WTC11 (cell line): ENCODE measurements at regions of chr7 and their contacts with region 1.

Region 1: GRCh38 chr7:131859147-131859821 is 302.9 kb upstream of the PODXL start:
- DNase-seq: peak; percentile 83
- ATAC-seq: peak; percentile 98
- H3K4me3 Mint-ChIP-seq: no peak overlapping the region
- H3K27ac Mint-ChIP-seq: no peak overlapping the region
- H3K4me1 Mint-ChIP-seq: peaks cover 6% of the 10 kb centered on the region; the same call in 1 of the 2 replicates
- H3K27me3 Mint-ChIP-seq: peaks cover 6% of the 10 kb centered on the region
- CTCF ChIP-seq: peak; percentile 79

Region 2: DNA sequence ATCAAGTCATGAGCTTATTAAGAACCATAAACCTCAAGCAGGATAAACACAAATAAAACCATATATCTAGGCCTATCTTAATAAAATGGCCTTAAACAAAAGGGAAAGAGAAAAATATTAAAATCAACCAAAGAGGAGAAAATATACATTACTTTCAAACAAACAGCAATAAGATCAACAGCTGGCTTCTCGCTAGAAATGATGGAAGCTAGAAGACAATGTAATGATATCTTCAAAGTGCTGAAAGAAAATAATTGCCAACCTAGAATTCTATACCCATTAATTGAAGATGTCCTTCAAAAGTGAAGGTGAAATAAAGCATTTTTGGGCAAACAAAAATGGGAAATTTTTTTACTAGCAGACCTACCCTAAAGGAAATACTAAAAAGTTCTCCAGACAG is 160.0 kb before region 1 on chr7:
- CTCF ChIA-PET with region 1: interaction called, 14 read pairs
- POLR2A ChIA-PET with region 1: no interaction called
- DNase-seq: no peak
- ATAC-seq: no peak
- H3K4me3 Mint-ChIP-seq: no peak overlapping the region
- H3K27ac Mint-ChIP-seq: no peak overlapping the region
- H3K4me1 Mint-ChIP-seq: no peaks in the 10 kb centered on the region
- H3K27me3 Mint-ChIP-seq: peaks cover 4% of the 10 kb centered on the region; the same call in 1 of the 2 replicates
- CTCF ChIP-seq: no peak

Region 3: DNA sequence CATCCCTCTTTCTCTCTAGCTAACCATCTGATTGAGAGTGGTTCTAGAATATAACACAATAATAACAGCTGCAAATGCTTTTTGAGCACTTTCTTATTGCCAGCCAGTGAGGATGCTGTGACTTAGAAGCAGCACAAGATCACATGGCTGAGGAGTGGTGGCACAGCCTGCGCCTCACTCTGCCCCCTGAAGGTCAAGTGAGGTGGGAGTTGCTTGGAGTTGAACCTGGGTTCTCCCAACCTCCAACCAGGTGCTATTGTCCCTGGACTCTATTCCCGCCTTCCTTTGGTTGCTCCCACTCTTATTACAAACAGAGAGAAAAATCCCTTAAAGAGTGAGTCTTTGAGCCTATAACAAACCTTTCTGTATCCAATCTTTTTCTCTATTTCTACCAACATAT is 22.6 kb before region 1 on chr7:
- CTCF ChIA-PET with region 1: interaction called, 14 read pairs
- POLR2A ChIA-PET with region 1: no interaction called
- DNase-seq: peak; percentile 53
- ATAC-seq: peak; percentile 99
- H3K4me3 Mint-ChIP-seq: no peak overlapping the region
- H3K27ac Mint-ChIP-seq: no peak overlapping the region
- H3K4me1 Mint-ChIP-seq: peaks cover 5% of the 10 kb centered on the region; the same call in 1 of the 2 replicates
- H3K27me3 Mint-ChIP-seq: peaks cover 7% of the 10 kb centered on the region
- CTCF ChIP-seq: no peak; the same call in 1 of the 2 replicates

Region 4: DNA sequence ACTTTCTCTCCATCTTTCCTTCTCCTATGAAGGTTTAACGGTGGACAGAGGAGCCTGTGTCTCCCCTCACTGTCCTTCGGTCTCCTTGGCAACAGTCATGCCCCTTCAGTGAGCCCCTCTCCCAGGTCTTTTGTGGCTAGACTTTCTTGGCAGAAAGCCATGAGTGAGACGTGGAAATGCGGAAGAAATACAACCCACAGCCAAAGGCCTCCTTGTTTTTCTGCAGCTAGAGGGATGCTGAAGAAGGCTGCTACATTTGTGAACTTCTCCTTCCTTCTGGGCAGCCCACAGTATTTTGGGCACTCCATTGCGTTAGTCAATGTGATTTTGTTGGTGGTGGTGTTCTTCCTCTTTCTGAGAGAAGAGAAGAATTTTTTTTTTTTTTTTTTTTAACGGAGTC is 30.9 kb after region 1 on chr7:
- CTCF ChIA-PET with region 1: interaction called, 15 read pairs
- POLR2A ChIA-PET with region 1: no interaction called
- DNase-seq: no peak
- ATAC-seq: no peak
- H3K4me3 Mint-ChIP-seq: no peak overlapping the region
- H3K27ac Mint-ChIP-seq: no peak overlapping the region
- H3K4me1 Mint-ChIP-seq: peaks cover 7% of the 10 kb centered on the region
- H3K27me3 Mint-ChIP-seq: peaks cover 93% of the 10 kb centered on the region
- CTCF ChIP-seq: no peak

Region 5: DNA sequence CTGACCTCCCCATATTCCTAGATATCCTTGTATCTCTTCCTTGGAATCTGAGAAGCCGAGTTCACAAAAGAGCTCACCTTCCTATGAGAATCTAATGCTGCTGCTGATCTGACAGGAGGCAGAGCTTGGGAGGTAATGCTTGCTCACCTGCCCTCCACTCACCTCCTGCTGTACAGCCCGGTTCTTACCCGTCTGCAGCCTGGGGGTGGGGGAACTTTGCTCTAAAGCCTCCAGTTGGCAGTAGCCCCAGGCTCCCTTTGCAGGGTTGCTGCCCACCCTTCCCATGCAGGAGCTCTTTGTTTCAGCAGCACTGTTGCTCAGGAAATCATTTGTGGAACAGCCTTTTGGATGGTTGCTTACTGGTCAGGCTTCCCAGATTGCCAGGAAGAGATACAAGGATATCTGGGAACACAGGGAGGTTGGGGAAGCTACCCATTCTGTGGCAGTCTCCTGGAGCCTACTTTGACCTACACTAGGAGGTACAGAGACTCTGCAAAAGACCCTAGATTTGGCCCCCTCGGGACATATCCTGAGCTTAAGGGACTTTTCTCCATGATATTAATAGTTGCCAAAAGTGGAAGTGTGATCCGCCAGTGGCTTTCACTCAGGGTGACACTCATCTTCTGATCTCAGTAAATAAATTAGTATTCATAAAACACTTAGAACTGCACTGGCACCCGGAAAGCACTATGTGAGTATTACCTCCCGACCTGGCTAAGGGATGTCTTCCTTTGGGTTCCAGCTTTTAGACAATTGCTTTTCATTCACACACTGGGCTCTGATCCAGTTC is 60.8 kb after region 1 on chr7:
- CTCF ChIA-PET with region 1: interaction called, 30 read pairs
- POLR2A ChIA-PET with region 1: no interaction called
- DNase-seq: peak; percentile 24
- ATAC-seq: no peak; the same call in none of the 2 replicates
- H3K4me3 Mint-ChIP-seq: no peak overlapping the region
- H3K27ac Mint-ChIP-seq: no peak overlapping the region
- H3K4me1 Mint-ChIP-seq: 0 out of 2 replicates have a peak, but pooled peaks cover 5% of the 10 kb centered on the region
- H3K27me3 Mint-ChIP-seq: no peaks in the 10 kb centered on the region
- CTCF ChIP-seq: no peak

Region 6: DNA sequence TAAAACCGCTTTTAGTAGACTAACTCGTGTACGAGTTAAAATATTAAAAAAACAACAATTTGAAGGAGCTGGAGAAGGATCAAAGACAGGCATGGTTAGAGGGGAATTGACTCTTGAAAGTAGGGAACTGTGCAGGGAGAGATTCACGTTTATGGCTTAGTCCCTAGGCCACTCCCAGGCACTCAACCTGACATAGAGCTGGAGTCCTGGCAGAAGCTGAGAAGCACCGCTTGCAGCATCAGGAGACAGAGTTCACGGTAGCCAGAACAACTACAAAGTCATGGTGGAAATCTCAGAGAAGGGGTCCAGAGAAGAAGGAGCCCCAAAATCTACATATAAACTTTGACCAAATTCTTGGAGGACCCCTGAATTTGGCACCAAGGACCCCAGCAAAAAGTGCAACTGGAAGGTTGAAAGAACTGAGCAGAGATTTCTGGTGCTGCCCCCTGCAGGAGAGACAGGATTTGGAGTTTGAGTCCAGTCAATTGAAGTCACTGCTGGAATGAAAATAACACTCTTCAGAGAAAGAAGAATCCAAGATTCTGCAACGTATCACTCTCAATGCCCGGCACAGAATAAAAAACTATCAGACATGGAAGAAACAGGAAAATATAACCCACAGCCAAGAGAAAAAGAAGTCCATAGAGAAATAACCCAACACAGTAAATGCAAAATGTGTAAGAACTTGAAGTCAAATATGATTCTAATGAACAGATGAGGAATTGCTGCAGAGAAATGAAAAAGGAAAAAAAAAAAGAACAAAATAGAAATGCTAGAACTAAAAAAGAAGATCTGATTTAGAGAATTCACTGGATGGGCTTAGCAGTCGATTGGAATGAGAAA is 190.4 kb after region 1 on chr7:
- CTCF ChIA-PET with region 1: interaction called, 14 read pairs
- POLR2A ChIA-PET with region 1: no interaction called
- DNase-seq: peak; percentile 76
- ATAC-seq: peak; percentile 78
- H3K4me3 Mint-ChIP-seq: no peak overlapping the region
- H3K27ac Mint-ChIP-seq: no peak overlapping the region
- H3K4me1 Mint-ChIP-seq: no peaks in the 10 kb centered on the region
- H3K27me3 Mint-ChIP-seq: no peaks in the 10 kb centered on the region
- CTCF ChIP-seq: peak; percentile 51

Region 7: DNA sequence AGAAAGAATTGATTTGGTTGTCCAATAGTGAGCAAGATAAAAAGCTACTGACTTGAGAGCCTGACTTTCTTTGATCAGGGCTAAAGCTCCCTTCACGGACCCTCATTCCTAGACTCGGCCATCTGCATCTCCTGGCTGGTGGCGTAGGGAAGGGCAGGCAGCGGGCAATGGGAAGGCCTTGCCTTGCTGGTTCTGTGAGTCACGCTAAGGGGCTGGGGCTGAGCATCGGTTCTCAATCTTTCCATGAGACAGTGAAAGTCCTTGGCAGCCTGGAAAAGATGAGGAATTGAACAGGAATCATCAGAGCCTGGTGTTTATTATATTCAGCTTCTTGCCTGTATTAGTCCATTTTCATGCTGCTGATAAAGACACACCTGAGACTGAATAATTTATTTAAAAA is 241.7 kb after region 1 on chr7:
- CTCF ChIA-PET with region 1: no interaction called
- POLR2A ChIA-PET with region 1: no interaction called
- DNase-seq: no peak
- ATAC-seq: no peak
- H3K4me3 Mint-ChIP-seq: no peak overlapping the region
- H3K27ac Mint-ChIP-seq: no peak overlapping the region
- H3K4me1 Mint-ChIP-seq: peaks cover 7% of the 10 kb centered on the region; the same call in 1 of the 2 replicates
- H3K27me3 Mint-ChIP-seq: no peaks in the 10 kb centered on the region; the same call in 1 of the 2 replicates
- CTCF ChIP-seq: no peak

Region 8: DNA sequence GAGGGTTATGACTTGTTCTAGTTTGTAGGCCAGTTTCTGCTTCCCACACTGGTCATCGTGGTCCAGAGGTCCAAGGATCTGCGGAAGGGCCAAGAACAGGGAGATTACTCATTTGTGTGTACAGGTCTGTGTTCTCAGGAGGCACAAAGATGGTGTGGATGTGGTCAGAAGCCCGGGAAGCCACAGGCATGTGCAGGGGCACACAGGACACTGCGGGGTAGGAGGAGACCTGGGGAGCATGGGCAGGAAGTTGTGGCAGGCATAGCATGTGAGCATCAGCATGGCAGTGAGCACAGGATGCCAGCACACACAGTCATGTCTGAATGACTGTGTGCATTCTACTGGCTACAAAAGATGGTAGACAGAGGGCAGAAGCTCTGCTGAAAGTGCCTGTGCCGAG is 271.2 kb after region 1 on chr7:
- CTCF ChIA-PET with region 1: no interaction called
- POLR2A ChIA-PET with region 1: no interaction called
- DNase-seq: no peak
- ATAC-seq: no peak
- H3K4me3 Mint-ChIP-seq: no peak overlapping the region
- H3K27ac Mint-ChIP-seq: no peak overlapping the region
- H3K4me1 Mint-ChIP-seq: peaks cover 17% of the 10 kb centered on the region
- H3K27me3 Mint-ChIP-seq: peaks cover 3% of the 10 kb centered on the region
- CTCF ChIP-seq: no peak